ENCODE measurements at regions of chr18 and their contacts with region 1.

Region 1: GRCh38 chr18:62982600-62983251 is 267.4 kb downstream of the PHLPP1 start:
- DNase-seq: peak; percentile 27 to 44
- ATAC-seq: peak in 1 of 2 experiments; percentile 80; a peak in 3 of 6 replicates
- H3K4me3 ChIP-seq: no peak overlapping the region
- H3K27ac ChIP-seq: 0 out of 6 replicates have a peak overlapping the region, but pooled peaks of 1 of the 2 experiments have one; percentile 27
- H3K4me1 ChIP-seq: peaks cover 11% of the 10 kb centered on the region; the same call in 2 of the 3 replicates
- CTCF ChIP-seq: peak; percentile 75
- EP300 ChIP-seq: no peak
- POLR2A ChIP-seq: no peak
- RAD21 ChIP-seq: peak; percentile 85

Region 2: DNA sequence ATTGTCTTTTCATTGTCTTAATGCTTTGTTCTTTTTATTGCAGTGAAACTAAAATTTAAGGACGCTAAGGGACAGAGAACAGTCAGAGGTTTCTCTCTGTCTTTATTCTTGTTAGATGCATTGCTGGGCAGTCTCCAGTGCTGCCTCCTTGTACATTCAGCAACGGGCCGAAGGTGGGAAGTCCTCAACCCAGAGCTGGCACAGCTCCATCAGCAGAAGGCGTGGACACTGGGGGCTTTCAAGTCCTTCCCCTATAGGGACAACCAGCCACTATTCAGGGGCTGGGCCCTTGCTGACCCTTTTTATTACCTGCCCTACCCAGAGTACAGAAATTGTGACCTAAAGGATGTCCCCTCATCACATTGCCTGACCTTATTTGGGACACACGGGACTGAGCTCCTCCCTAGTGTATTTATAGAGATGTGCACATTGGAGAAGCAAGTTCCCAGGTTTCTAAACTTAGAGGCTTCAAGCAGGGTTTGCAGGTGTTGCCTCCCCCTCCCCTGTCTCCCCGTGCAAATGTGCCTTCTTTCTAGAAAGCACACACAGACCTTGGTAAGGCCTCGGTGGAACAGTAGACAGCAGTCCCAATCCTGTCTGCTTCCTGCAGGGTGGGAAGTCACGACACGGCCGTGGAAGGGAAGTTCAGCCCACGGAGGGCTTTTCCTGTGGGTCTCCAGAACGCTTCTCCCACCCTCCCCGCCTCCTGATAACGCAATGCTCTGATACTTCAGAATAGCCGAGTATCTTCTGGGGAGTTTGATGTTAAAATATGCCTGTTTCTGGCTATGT is 391.7 kb before region 1 on chr18:
- CTCF ChIA-PET with region 1: interaction called, 61 read pairs
- POLR2A ChIA-PET with region 1: no interaction called
- DNase-seq: no peak
- ATAC-seq: no peak
- H3K4me3 ChIP-seq: no peak overlapping the region
- H3K27ac ChIP-seq: no peak overlapping the region
- H3K4me1 ChIP-seq: no peaks in the 10 kb centered on the region
- CTCF ChIP-seq: no peak
- EP300 ChIP-seq: no peak
- POLR2A ChIP-seq: no peak
- RAD21 ChIP-seq: no peak

Region 3: DNA sequence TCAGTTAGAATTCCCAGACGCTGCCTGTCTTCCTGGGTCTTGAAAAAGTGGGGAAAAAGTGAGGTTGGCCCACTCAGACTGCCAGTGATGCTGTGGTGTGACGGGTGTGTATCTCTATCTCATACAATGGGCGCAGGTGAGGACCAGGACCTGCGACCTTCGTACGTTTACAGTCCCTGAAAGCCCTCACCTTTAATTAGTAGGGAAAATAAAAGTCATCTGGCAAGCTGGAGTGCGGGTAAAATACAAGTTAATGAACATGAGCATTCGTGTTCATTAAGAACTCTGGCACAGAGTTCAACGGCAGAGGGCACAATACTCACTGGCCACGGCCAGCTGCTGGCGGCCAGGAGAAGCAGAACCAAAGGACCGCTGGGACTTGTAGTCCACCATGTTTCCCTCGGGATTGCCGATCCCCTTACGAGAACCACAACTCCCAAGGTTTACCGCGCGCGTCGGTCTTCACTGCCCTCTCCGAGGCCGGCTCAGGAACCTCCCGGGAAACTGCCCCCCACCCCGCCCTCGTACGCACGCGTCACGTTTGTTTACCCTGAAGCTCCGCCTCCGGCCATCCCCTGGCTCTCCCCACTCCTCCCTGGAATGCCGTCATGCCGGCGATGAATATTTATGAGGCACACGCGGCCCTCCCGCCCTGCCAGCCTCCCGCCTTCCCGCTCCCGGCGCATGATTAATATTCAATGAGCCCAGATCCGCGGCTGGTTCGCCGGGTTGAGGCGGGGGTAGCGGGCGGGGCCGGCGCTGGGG is 267.9 kb before region 1 on chr18:
- CTCF ChIA-PET with region 1: interaction called, 48 read pairs
- POLR2A ChIA-PET with region 1: interaction called, 4 read pairs
- DNase-seq: peak; percentile 89 to 99
- ATAC-seq: peak; percentile 90 to 98
- H3K4me3 ChIP-seq: peak overlapping the region; percentile 69
- H3K27ac ChIP-seq: peak overlapping the region; percentile 85 to 93
- H3K4me1 ChIP-seq: peaks cover 25% of the 10 kb centered on the region
- CTCF ChIP-seq: peak; percentile 75
- EP300 ChIP-seq: no peak
- POLR2A ChIP-seq: no peak
- RAD21 ChIP-seq: peak; percentile 80 to 81

Region 4: DNA sequence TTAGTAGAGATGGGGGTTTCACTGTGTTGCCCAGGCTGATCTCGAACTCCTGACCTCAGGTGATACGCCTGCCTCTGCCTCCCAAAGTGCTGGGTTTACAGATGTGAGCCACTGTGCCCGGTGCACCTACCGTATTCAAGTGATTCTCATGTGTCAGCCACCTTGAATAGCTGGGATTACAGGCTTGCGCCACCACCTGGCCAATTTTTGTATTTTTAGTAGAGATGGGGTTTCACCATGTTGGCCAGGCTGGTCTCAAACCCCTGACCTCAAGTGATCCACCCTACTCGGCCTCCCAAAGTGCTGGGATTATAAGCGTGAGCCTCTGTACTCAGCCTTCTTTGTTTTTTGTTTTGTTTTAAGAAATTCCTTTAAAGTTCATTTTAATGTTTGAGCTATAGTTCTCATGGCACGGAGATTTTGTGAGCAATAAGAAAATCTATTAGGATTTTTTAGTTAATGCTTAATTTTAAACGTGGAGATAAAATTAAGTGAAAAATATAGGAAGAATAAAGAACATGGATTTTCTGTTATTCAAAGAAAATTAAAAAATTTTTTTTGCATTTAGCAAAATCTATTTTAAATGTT is 24.7 kb before region 1 on chr18:
- CTCF ChIA-PET with region 1: interaction called, 13 read pairs
- POLR2A ChIA-PET with region 1: no interaction called
- DNase-seq: peak in 1 of 2 experiments; percentile 65
- ATAC-seq: peak; percentile 54 to 86; a peak in 3 of 6 replicates
- H3K4me3 ChIP-seq: no peak overlapping the region
- H3K27ac ChIP-seq: 0 out of 6 replicates have a peak overlapping the region, but pooled peaks of 1 of the 2 experiments have one; percentile 45
- H3K4me1 ChIP-seq: peaks cover 9% of the 10 kb centered on the region; the same call in 1 of the 3 replicates
- CTCF ChIP-seq: peak; percentile 51
- EP300 ChIP-seq: no peak
- POLR2A ChIP-seq: no peak
- RAD21 ChIP-seq: peak; percentile 64 to 67

Measured in A549 (cell line).